IMR-90 (cell line): ENCODE measurements at regions of chr12 and their contacts with region 1.

Region 1: DNA sequence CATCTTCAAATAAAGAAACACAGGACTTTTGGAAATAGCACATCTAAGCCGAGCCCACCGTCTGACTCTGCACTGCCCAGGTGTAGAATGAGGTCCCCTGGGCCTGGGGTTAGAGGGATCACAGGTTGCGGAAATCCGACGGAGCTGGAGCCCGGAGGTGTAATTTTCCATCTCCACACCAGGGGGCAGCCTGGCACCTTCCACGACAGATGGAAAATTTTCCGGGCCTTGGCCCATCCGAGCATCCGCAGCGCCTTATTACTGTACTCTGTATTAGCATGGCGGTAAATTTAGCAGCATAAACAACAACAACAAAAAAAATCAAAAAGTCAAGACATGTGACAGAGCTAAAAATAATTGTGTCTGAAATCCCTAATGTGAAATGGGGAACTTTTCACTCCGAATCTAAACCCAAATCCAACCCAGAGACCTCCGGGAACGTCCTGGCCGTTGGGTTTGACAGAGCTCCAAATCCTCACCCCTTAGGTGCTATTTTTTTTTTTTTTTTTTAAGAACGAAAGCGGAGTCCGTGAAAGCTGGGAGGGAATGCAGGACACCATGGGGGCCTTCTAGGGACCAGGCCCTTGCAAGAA is 93.9 kb downstream of the KSR2 start:
- DNase-seq: peak; percentile 35
- ATAC-seq: peak; percentile 97
- H3K4me3 ChIP-seq: no peak overlapping the region
- H3K27ac ChIP-seq: no peak overlapping the region
- H3K4me1 ChIP-seq: no peaks in the 10 kb centered on the region
- H3K27me3 ChIP-seq: no peaks in the 10 kb centered on the region; the same call in 1 of the 2 replicates
- CTCF ChIP-seq: peak; percentile 74
- POLR2A ChIP-seq: no peak
- RAD21 ChIP-seq: peak; percentile 80

Region 2: GRCh38 chr12:116924558-116925453 is 950.1 kb before region 1 on chr12:
- CTCF ChIA-PET with region 1: no interaction called
- POLR2A ChIA-PET with region 1: no interaction called
- dilution Hi-C with region 1: no loop called
- in situ Hi-C with region 1: no loop called
- intact Hi-C with region 1: no loop called
- DNase-seq: peak; percentile 91
- ATAC-seq: peak; percentile 94
- H3K4me3 ChIP-seq: no peak overlapping the region
- H3K27ac ChIP-seq: no peak overlapping the region
- H3K4me1 ChIP-seq: peaks cover 9% of the 10 kb centered on the region
- H3K27me3 ChIP-seq: no peaks in the 10 kb centered on the region
- CTCF ChIP-seq: no peak
- POLR2A ChIP-seq: no peak
- RAD21 ChIP-seq: no peak

Region 3: GRCh38 chr12:118016424-118017264 is 141.7 kb after region 1 on chr12 and contains the start of gene RFC5:
- CTCF ChIA-PET with region 1: interaction called, 3 read pairs
- POLR2A ChIA-PET with region 1: no interaction called
- dilution Hi-C with region 1: no loop called
- in situ Hi-C with region 1: loop called (anchors 10 kb)
- intact Hi-C with region 1: loop called (anchors 5 kb)
- DNase-seq: peak; percentile 93
- ATAC-seq: peak; percentile 99
- H3K4me3 ChIP-seq: peak within 1 kb of the TSS; percentile 96
- H3K27ac ChIP-seq: peak within 1 kb of the TSS; percentile 69
- H3K4me1 ChIP-seq: no peaks in the 10 kb centered on the region
- H3K27me3 ChIP-seq: no peaks in the 10 kb centered on the region
- CTCF ChIP-seq: 0 out of 2 replicates have a peak, but pooled peaks have one; percentile 7
- POLR2A ChIP-seq: no peak
- RAD21 ChIP-seq: no peak
- total RNA-seq, gene RFC5: 20.1 and 20.6 TPM in 2 replicates

Region 4: GRCh38 chr12:118035246-118036041 is 160.5 kb after region 1 on chr12:
- CTCF ChIA-PET with region 1: interaction called, 10 read pairs
- POLR2A ChIA-PET with region 1: no interaction called
- dilution Hi-C with region 1: no loop called
- in situ Hi-C with region 1: no loop called
- intact Hi-C with region 1: loop called (anchors 1 kb)
- DNase-seq: peak; percentile 22
- ATAC-seq: peak; percentile 33
- H3K4me3 ChIP-seq: no peak overlapping the region
- H3K27ac ChIP-seq: no peak overlapping the region
- H3K4me1 ChIP-seq: no peaks in the 10 kb centered on the region
- H3K27me3 ChIP-seq: no peaks in the 10 kb centered on the region
- CTCF ChIP-seq: no peak
- POLR2A ChIP-seq: no peak
- RAD21 ChIP-seq: no peak

Region 5: GRCh38 chr12:118103604-118104382 is 228.9 kb after region 1 on chr12 and contains the start of gene VSIG10:
- CTCF ChIA-PET with region 1: no interaction called
- POLR2A ChIA-PET with region 1: no interaction called
- dilution Hi-C with region 1: no loop called
- in situ Hi-C with region 1: no loop called
- intact Hi-C with region 1: loop called (anchors 5 kb)
- DNase-seq: peak; percentile 53
- ATAC-seq: peak; percentile 94
- H3K4me3 ChIP-seq: peak within 1 kb of the TSS; percentile 69
- H3K27ac ChIP-seq: peak within 1 kb of the TSS; percentile 68
- H3K4me1 ChIP-seq: 0 out of 2 replicates have a peak, but pooled peaks cover 2% of the 10 kb centered on the region
- H3K27me3 ChIP-seq: no peaks in the 10 kb centered on the region
- CTCF ChIP-seq: no peak
- POLR2A ChIP-seq: no peak
- RAD21 ChIP-seq: no peak
- total RNA-seq, gene VSIG10: 10.0 and 17.5 TPM in 2 replicates

Region 6: GRCh38 chr12:118120579-118121363 is 245.8 kb after region 1 on chr12:
- CTCF ChIA-PET with region 1: no interaction called
- POLR2A ChIA-PET with region 1: no interaction called
- dilution Hi-C with region 1: no loop called
- in situ Hi-C with region 1: loop called (anchors 25 kb)
- intact Hi-C with region 1: loop called (anchors 5 kb)
- DNase-seq: peak; percentile 61
- ATAC-seq: peak; percentile 97
- H3K4me3 ChIP-seq: no peak overlapping the region
- H3K27ac ChIP-seq: peak overlapping the region; percentile 39; the same call in 1 of the 2 replicates
- H3K4me1 ChIP-seq: peaks cover 2% of the 10 kb centered on the region; the same call in 1 of the 2 replicates
- H3K27me3 ChIP-seq: no peaks in the 10 kb centered on the region
- CTCF ChIP-seq: peak; percentile 50
- POLR2A ChIP-seq: no peak
- RAD21 ChIP-seq: peak; percentile 45

Region 7: GRCh38 chr12:118135788-118136558 is 261.0 kb after region 1 on chr12 and contains the start of gene PEBP1:
- CTCF ChIA-PET with region 1: no interaction called
- POLR2A ChIA-PET with region 1: no interaction called
- dilution Hi-C with region 1: no loop called
- in situ Hi-C with region 1: loop called (anchors 25 kb)
- intact Hi-C with region 1: loop called (anchors 2 kb)
- DNase-seq: peak; percentile 84
- ATAC-seq: peak; percentile 99
- H3K4me3 ChIP-seq: peak within 1 kb of the TSS; percentile 78
- H3K27ac ChIP-seq: peak within 1 kb of the TSS; percentile 42
- H3K4me1 ChIP-seq: peaks cover 2% of the 10 kb centered on the region; the same call in 1 of the 2 replicates
- H3K27me3 ChIP-seq: no peaks in the 10 kb centered on the region
- CTCF ChIP-seq: no peak
- POLR2A ChIP-seq: peak; percentile 67; the same call in 1 of the 2 replicates
- RAD21 ChIP-seq: no peak
- total RNA-seq, gene PEBP1: 129 and 137 TPM in 2 replicates